ENCODE measurements at regions of chr6 and their contacts with region 1.

Region 1: DNA sequence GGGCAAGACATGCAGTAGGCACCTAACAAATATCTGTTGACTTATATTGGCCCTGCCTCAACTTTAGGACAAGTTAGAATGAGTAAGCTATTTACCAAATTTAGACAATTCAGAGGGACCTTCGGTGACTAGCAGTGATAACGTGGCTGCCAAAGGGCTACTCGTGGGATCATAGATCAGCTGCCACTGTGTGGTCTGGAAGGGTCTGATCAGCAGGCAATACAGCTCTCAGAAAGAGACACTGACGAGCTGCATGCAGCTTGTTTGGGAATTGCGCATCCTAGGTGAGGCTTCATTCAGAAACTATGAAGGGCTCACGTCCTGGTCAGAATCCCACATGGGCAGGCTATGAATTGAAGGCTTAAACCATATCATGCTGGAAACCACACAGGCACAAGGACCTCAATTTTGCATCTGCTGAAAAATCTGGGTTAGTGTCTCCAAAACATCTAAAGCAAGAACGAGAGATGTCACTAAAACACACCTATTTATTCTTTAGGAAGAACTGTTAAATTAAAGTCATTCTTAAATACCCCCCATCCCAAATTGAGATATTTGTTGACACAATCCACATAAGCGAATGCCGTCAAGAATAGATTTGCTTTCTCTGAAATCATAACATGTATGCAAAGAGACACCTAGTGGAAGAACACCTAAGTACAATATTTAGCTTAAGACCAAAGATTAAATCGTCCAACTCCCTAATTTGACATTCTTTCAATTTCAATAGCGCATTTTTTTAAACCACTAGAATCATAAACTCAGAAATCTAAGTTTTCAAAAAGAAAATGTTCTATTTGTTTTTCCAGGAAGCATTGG is 79.6 kb downstream of the IPCEF1 start:
- DNase-seq: no peak
- ATAC-seq: peak; percentile 83 to 92 (median 90)
- H3K4me3 ChIP-seq: peak overlapping the region in 2 of 3 donors; percentile 3 to 15
- H3K27ac ChIP-seq: no peak overlapping the region
- H3K4me1 ChIP-seq: no peaks in the 10 kb centered on the region
- H3K27me3 ChIP-seq: no peaks in the 10 kb centered on the region
- CTCF ChIP-seq: peak; percentile 58 to 76 (median 68)
- POLR2A ChIP-seq: no peak

Region 2: GRCh38 chr6:154154359-154154967 is 122.6 kb before region 1 on chr6:
- intact Hi-C with region 1: loop called in 1 of 2 experiments (anchors 5 kb)
- DNase-seq: peak in 1 of 3 donors; percentile 60
- ATAC-seq: peak; percentile 42 to 69 (median 60)
- H3K4me3 ChIP-seq: no peak overlapping the region
- H3K27ac ChIP-seq: no peak overlapping the region
- H3K4me1 ChIP-seq: peaks cover 0 to 27% (median 5%) of the 10 kb centered on the region in 4 donors
- H3K27me3 ChIP-seq: no peaks in the 10 kb centered on the region
- CTCF ChIP-seq: peak; percentile 78 to 87 (median 86)
- POLR2A ChIP-seq: no peak

Region 3: GRCh38 chr6:154329350-154330170 is 52.5 kb after region 1 on chr6:
- intact Hi-C with region 1: no loop called
- DNase-seq: no peak
- ATAC-seq: no peak
- H3K4me3 ChIP-seq: no peak overlapping the region
- H3K27ac ChIP-seq: no peak overlapping the region
- H3K4me1 ChIP-seq: no peaks in the 10 kb centered on the region
- H3K27me3 ChIP-seq: no peaks in the 10 kb centered on the region
- CTCF ChIP-seq: no peak
- POLR2A ChIP-seq: no peak

Measured in right lobe of liver (tissue), 6 donors.